ENCODE measurements at regions of chr4 and their contacts with region 1.

Region 1: DNA sequence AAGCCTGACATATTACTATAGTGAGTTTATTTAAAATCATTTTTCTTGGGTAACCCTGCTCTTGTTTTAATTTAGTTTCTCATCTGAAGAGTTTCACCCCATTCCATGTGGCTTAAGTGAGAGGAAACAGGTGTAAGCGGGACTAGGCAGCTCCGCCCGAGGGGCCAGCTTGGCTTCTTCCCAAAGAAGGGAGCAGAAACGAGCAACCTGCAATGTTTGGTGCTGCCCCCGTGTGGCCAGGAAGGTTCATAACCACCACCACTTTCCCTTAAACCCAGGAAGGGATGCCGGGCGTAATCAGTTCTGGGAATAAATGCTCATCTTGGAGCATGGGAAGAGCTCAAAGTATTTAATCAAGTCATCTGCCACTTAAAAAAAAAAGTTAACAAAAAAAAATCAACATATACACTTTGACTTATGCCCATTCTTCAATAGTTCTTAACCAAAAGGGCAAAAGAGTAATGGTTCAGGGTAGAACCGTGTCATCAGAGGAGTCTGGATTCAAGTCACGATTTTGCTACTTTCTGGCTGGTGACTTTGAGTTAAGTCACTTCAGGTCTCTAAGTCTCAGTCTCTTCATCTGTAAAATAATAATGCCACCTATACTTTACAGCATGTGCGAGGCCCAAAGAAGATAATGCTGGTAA is 147.9 kb downstream of the NSUN7 start:
- DNase-seq: peak; percentile 81
- ATAC-seq: peak; percentile 64 to 67

Region 2: GRCh38 chr4:40736910-40737309 is 160.8 kb before region 1 on chr4:
- intact Hi-C with region 1: loop called in 1 of 2 experiments (anchors 5 kb)
- DNase-seq: no peak
- ATAC-seq: no peak

Region 3: DNA sequence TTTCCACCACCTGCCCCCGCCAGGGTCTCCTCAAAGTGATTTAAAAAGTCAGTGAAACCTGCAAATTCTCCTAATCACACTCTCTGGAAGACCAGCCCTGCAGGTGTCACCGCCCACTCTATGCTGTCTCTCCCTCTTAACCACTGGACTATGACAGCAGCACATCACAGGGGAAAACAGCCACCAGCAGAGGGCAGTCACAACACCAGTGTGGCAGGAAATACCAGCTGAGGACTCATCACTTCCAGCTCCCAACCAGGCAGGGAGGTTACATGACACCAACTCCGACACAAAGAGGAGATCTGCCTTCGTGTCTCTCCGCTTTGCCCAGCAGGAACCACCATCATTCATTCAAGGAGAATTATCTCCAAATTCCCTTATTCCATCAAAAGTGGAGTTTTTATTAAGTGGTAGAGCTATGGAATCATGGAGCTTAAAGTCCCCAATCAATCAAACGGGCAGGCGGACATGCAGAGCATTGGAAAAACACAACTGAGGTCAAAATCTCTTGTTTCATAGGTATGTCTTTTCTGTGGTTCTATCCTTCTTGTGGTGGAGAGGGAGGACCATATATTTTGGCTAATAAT is 56.6 kb before region 1 on chr4:
- intact Hi-C with region 1: loop called (anchors 2 to 10 kb)
- DNase-seq: peak; percentile 86
- ATAC-seq: peak; percentile 35 to 70

Measured in left cardiac atrium (tissue), 4 donors.